WTC11 (cell line): ENCODE measurements at regions of chr1 and their contacts with region 1.

Region 1: GRCh38 chr1:201436393-201436792 is 14.9 kb upstream of the TNNI1 start:
- DNase-seq: peak; percentile 72
- ATAC-seq: peak; percentile 97
- H3K4me3 Mint-ChIP-seq: no peak overlapping the region; the same call in 1 of the 2 replicates
- H3K27ac Mint-ChIP-seq: no peak overlapping the region; the same call in 1 of the 2 replicates
- H3K4me1 Mint-ChIP-seq: peaks cover 19% of the 10 kb centered on the region
- H3K27me3 Mint-ChIP-seq: no peaks in the 10 kb centered on the region; the same call in 1 of the 2 replicates
- CTCF ChIP-seq: no peak

Region 2: DNA sequence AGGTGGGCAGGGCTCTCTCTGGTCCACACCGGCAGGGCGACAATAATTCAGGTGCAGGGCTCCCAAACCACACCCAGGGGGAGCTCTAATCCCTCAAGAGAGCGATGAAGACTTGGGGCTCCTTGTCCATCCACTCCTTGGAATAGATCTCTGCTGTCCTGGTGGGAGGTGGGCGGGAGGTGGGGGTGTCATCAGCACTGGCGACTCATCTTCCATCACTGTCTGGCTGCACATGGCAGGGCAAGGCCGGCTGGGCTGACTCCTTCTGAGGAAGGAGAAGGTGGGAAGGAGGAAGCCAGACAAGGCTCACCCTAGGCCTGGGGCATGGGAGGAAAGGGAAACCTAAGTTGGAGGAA is 88.2 kb before region 1 on chr1:
- CTCF ChIA-PET with region 1: interaction called, 12 read pairs
- POLR2A ChIA-PET with region 1: no interaction called
- DNase-seq: peak; percentile 81
- ATAC-seq: peak; percentile 87
- H3K4me3 Mint-ChIP-seq: no peak overlapping the region; the same call in 1 of the 2 replicates
- H3K27ac Mint-ChIP-seq: 0 out of 2 replicates have a peak overlapping the region, but pooled peaks have one; percentile 10
- H3K4me1 Mint-ChIP-seq: peaks cover 40% of the 10 kb centered on the region
- H3K27me3 Mint-ChIP-seq: no peaks in the 10 kb centered on the region; the same call in 1 of the 2 replicates
- CTCF ChIP-seq: peak; percentile 74

Region 3: DNA sequence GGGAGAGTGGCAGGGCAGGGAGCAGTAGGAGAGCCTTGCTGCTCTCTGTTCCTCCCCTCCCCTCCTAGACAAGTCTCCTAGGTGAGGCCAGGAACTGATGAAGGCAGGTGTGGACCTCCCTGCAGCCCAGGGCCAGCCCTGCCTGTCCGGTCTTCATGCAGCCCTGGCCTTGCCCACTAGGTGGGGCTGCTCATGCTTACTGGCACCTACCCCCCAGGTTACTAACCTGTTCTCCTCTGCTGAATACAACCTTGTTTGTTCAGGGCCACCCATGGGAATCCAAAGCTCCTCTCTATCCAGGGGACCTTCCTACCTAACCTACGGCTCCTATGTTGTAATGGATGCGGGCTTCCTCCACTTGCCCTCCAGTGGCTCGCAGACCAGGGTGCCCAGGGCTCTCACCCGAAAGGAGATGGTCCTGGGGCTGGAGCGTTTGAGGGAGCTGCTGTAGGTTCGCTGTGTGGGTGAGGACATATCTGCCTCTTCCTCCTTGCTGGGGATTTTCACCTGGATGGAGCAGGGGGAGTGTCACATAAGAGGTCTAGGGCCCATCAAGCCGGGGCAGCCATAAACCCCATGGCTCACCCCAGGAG is 51.0 kb before region 1 on chr1:
- CTCF ChIA-PET with region 1: interaction called, 18 read pairs
- POLR2A ChIA-PET with region 1: no interaction called
- DNase-seq: peak; percentile 90
- ATAC-seq: peak; percentile 95
- H3K4me3 Mint-ChIP-seq: no peak overlapping the region
- H3K27ac Mint-ChIP-seq: no peak overlapping the region
- H3K4me1 Mint-ChIP-seq: no peaks in the 10 kb centered on the region; the same call in 1 of the 2 replicates
- H3K27me3 Mint-ChIP-seq: no peaks in the 10 kb centered on the region
- CTCF ChIP-seq: peak; percentile 81

Region 4: DNA sequence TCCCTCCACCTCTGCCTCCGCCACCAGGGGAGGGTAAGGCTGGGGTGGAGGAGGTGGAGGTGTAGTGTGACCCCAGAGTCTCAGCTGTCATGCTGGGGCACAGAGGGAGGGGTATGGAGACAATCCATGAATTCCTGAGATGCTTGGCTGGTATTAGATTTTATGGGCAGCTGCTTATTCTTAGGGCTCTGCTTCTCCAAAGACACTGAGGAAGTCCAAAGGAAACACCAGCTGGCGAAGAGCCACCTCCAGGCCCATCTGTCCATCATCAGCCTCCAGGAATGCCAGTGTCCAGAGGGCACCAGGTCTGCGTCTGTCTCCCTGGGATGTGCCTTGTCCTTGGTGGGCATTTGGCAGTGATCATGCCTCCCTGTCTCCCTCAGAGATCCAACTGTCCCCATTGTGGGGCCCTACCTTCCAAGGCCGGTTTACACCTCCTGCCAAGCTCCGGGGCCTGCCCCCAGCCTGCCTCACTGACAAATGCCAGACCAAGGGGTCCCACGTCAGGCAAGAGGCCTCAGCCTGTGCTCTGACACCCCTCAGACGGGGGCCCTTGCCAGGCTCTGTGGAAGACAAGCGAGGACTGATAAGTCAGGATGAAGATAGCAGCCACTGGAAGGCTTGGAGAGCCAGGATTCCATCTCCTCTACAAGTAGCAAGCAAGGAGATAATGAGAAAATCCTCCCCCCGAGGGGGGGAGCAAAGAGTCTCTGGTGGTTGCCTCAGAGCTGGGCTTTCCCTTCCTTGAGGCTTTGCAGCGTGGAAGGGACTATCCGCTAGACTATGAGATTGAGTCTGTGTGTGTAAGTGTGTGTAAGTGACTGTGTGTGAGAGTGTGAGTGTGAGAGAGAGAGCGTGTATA is 16.4 kb before region 1 on chr1:
- CTCF ChIA-PET with region 1: interaction called, 26 read pairs
- POLR2A ChIA-PET with region 1: no interaction called
- DNase-seq: no peak
- ATAC-seq: no peak
- H3K4me3 Mint-ChIP-seq: no peak overlapping the region
- H3K27ac Mint-ChIP-seq: no peak overlapping the region
- H3K4me1 Mint-ChIP-seq: peaks cover 9% of the 10 kb centered on the region
- H3K27me3 Mint-ChIP-seq: peaks cover 15% of the 10 kb centered on the region
- CTCF ChIP-seq: no peak

Region 5: GRCh38 chr1:201463071-201463552 is 26.7 kb after region 1 on chr1:
- CTCF ChIA-PET with region 1: interaction called, 27 read pairs
- POLR2A ChIA-PET with region 1: no interaction called
- DNase-seq: no peak
- ATAC-seq: peak; percentile 83
- H3K4me3 Mint-ChIP-seq: no peak overlapping the region
- H3K27ac Mint-ChIP-seq: 0 out of 2 replicates have a peak overlapping the region, but pooled peaks have one; percentile 5
- H3K4me1 Mint-ChIP-seq: peaks cover 26% of the 10 kb centered on the region
- H3K27me3 Mint-ChIP-seq: peaks cover 4% of the 10 kb centered on the region; the same call in 1 of the 2 replicates
- CTCF ChIP-seq: no peak